ENCODE measurements at regions of chr6 and their contacts with region 1.

Region 1: DNA sequence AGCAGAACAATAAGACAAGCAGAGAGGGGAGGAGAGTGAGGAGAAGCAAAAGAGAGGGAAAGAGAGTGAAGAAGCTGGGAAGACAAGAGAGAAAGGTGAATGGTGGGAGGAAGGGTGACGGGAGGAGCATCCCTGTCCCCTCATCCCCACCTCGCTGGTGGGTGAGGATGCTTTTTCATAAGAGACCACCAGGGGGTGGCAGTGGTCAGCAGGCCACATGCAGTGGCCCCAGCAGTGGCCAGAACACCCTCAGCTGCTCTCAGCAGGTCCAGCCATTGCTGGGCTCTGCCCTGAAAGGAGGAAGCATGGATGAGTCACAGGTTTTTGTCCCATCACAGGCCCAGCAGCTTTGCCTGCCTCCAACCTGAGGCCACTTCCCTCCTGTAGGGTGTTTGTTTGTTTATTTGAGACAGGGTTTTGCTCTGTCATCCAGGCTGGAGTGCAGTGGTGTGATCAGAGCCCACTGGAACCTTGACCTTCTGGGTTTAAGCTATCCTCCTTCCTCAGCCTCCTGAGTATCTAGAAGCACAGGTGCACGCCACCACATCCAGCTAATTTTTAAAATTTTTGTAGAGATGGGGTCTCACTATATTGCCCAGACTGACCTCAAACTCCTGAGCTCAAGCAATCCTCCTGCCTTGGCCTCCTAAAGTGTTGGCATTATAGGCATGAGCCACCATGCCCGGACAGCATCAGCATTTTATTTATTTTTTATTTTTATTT is 24.0 kb downstream of the FGD2 start:
- DNase-seq: peak; percentile 89
- H3K4me3 Mint-ChIP-seq: no peak overlapping the region
- H3K27ac Mint-ChIP-seq: peak overlapping the region; percentile 11
- H3K4me1 Mint-ChIP-seq: peaks cover 29% of the 10 kb centered on the region
- H3K27me3 Mint-ChIP-seq: no peaks in the 10 kb centered on the region
- CTCF ChIP-seq: peak; percentile 72

Region 2: DNA sequence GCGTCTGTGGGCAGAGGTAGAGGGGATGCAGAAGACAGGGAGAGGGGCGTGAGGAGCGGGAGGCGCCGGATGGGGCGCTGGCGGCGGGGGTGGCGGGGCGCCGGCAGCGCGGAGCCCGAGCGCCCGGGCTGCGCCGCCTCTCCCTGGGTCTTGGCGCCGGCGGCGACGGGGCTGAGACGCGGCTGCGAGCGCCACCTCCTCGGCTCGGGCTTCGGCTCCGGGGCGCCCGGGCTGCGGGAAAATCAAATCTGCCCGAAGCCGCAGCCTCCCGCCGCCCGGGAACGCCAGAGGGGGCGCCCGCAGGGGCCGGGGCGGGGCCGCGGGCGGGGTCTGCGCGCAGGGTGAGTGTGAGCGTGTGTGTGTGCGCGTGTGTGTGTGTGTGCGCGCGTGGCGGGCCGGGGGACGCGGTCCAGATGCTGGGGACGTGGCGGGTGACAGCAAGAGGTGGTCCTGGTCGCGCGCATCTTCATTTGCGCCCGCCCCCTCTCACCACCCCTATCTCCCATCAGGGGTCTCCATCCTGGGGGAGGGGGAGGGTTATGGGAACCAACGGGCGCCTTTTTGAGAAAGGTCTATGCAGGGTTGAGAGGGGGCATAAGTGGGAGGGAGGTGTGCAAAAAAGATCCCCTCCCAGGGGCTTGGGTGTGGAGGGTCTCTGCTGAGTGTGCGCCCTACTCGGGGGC is 189.5 kb before region 1 on chr6:
- CTCF ChIA-PET with region 1: no interaction called
- intact Hi-C with region 1: no loop called
- DNase-seq: peak; percentile 67
- H3K4me3 Mint-ChIP-seq: peak overlapping the region; percentile 56
- H3K27ac Mint-ChIP-seq: no peak overlapping the region
- H3K4me1 Mint-ChIP-seq: no peaks in the 10 kb centered on the region
- H3K27me3 Mint-ChIP-seq: peaks cover 58% of the 10 kb centered on the region
- CTCF ChIP-seq: peak; percentile 63

Region 3: GRCh38 chr6:37051138-37052026 is 22.0 kb after region 1 on chr6:
- CTCF ChIA-PET with region 1: interaction called, 20 read pairs
- intact Hi-C with region 1: loop called (anchors 5 kb)
- DNase-seq: peak; percentile 95
- H3K4me3 Mint-ChIP-seq: no peak overlapping the region
- H3K27ac Mint-ChIP-seq: no peak overlapping the region
- H3K4me1 Mint-ChIP-seq: peaks cover 47% of the 10 kb centered on the region
- H3K27me3 Mint-ChIP-seq: no peaks in the 10 kb centered on the region
- CTCF ChIP-seq: peak; percentile 92

Measured in Calu3 (cell line).